ENCODE measurements at regions of chr14 and their contacts with region 1.

Region 1: DNA sequence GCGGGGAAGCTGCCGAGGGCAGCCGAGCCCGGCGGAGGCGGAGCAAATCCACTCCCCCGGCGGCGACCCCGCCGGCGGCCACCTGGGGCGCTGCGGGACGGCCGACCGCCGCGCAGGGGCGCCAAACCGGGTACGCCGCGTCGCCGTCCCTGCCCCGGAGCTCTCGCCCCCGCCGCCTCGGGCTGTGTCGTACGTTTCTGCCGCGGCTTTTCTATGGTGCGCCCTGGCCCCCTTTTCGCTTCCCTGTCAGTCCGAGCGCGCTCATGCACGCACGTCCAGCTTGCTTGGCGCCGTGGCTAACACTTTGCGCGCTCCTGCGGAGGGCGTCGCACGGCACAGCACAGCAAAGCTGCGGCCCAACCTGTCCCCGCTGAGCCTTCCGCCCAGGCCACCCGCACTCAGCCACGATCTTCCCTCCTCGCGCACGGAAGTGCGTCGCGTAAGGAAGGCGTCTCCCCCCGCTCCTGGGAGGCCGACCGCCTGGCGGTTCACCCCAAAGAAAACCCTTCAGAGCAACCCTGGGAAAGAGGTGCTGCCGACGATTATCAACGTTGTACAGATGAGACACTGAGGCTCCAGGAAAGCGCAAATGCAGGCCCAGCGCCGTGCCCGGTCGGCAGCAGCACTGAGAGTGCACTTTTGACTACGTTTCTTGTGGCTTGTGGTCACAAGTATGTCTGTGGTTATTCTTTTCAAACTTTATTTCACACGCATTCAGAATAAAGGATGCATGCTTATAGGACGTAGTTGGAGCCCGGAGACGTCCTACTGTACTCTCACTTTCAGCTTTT is at the start of gene HECTD1:
- DNase-seq: peak; percentile 85 to 90 (median 88)
- ATAC-seq: peak; percentile 86
- H3K4me3 ChIP-seq: peak within 1 kb of the TSS; percentile 63
- H3K27ac ChIP-seq: peak within 1 kb of the TSS; percentile 99
- H3K4me1 ChIP-seq: peaks cover 6 to 9% of the 10 kb centered on the region in 2 experiments; a peak in 4 of 5 replicates
- H3K27me3 ChIP-seq: no peaks in the 10 kb centered on the region
- CTCF ChIP-seq: peak; percentile 48 to 97 (median 84); a peak in 5 of 6 replicates
- EP300 ChIP-seq: peak; percentile 37; the same call in 1 of the 2 replicates
- POLR2A ChIP-seq: peak; percentile 92
- RAD21 ChIP-seq: peak; percentile 61 to 64
- polyA plus RNA-seq, gene HECTD1: 27.9 to 37.2 TPM

Region 2: GRCh38 chr14:31229638-31230229 is 21.8 kb after region 1 on chr14:
- CTCF ChIA-PET with region 1: no interaction called
- POLR2A ChIA-PET with region 1: interaction called, 13 read pairs
- in situ Hi-C with region 1: no loop called
- intact Hi-C with region 1: no loop called
- DNase-seq: peak; percentile 67 to 91 (median 79)
- ATAC-seq: peak; percentile 98
- H3K4me3 ChIP-seq: peak overlapping the region; percentile 16; the same call in 1 of the 2 replicates
- H3K27ac ChIP-seq: peak overlapping the region; percentile 77
- H3K4me1 ChIP-seq: peaks cover 0 to 11% of the 10 kb centered on the region in 2 experiments; a peak in 3 of 5 replicates
- H3K27me3 ChIP-seq: no peaks in the 10 kb centered on the region
- CTCF ChIP-seq: no peak
- EP300 ChIP-seq: peak; percentile 94
- POLR2A ChIP-seq: peak; percentile 58
- RAD21 ChIP-seq: peak in 1 of 2 experiments; percentile 13; a peak in 1 of 4 replicates

Region 3: GRCh38 chr14:31243860-31244259 is 35.9 kb after region 1 on chr14:
- CTCF ChIA-PET with region 1: no interaction called
- POLR2A ChIA-PET with region 1: no interaction called
- in situ Hi-C with region 1: no loop called
- intact Hi-C with region 1: loop called (anchors 5 kb)
- DNase-seq: peak in 1 of 4 experiments; percentile 70
- ATAC-seq: peak; percentile 66
- H3K4me3 ChIP-seq: no peak overlapping the region
- H3K27ac ChIP-seq: peak overlapping the region; percentile 64; the same call in 2 of the 3 replicates
- H3K4me1 ChIP-seq: peaks cover 0 to 34% of the 10 kb centered on the region in 2 experiments; a peak in 3 of 5 replicates
- H3K27me3 ChIP-seq: no peaks in the 10 kb centered on the region
- CTCF ChIP-seq: no peak
- EP300 ChIP-seq: peak; percentile 14; the same call in 1 of the 2 replicates
- POLR2A ChIP-seq: no peak
- RAD21 ChIP-seq: no peak

Region 4: DNA sequence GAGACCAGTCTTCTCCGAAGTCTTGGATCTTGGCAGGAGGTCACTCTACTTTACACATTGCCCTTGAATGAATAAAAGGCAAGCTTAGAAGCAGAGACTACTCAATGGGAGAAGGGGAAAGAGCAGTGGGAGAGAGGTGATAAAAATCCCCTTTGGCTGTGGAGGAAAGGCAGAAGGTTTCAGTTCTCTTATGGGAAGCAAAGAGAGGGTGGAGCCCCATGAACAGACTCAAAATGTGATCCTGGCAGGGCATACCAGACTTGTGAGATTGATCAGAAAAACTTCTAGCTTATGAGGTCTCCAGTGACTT is 49.2 kb after region 1 on chr14:
- CTCF ChIA-PET with region 1: no interaction called
- POLR2A ChIA-PET with region 1: interaction called, 4 read pairs
- in situ Hi-C with region 1: loop called (anchors 5 kb)
- intact Hi-C with region 1: no loop called
- DNase-seq: no peak
- ATAC-seq: no peak
- H3K4me3 ChIP-seq: no peak overlapping the region
- H3K27ac ChIP-seq: no peak overlapping the region
- H3K4me1 ChIP-seq: no peaks in the 10 kb centered on the region; a peak in 2 of 5 replicates
- H3K27me3 ChIP-seq: no peaks in the 10 kb centered on the region
- CTCF ChIP-seq: no peak
- EP300 ChIP-seq: no peak
- POLR2A ChIP-seq: no peak
- RAD21 ChIP-seq: no peak

Region 5: GRCh38 chr14:31270196-31270772 is 62.3 kb after region 1 on chr14:
- CTCF ChIA-PET with region 1: no interaction called
- POLR2A ChIA-PET with region 1: no interaction called
- in situ Hi-C with region 1: no loop called
- intact Hi-C with region 1: no loop called
- DNase-seq: peak in 3 of 4 experiments; percentile 13 to 40 (median 16)
- ATAC-seq: peak; percentile 83
- H3K4me3 ChIP-seq: no peak overlapping the region
- H3K27ac ChIP-seq: no peak overlapping the region
- H3K4me1 ChIP-seq: peaks cover 6% of the 10 kb centered on the region in 2 experiments; a peak in 3 of 5 replicates
- H3K27me3 ChIP-seq: no peaks in the 10 kb centered on the region
- CTCF ChIP-seq: peak; percentile 29 to 43 (median 37)
- EP300 ChIP-seq: no peak
- POLR2A ChIP-seq: no peak
- RAD21 ChIP-seq: peak in 1 of 2 experiments; percentile 33; a peak in 2 of 4 replicates